Right ventricle myocardium inferior (tissue), 1 donor: ENCODE measurements at regions of chr11 and their contacts with region 1.

Region 1: DNA sequence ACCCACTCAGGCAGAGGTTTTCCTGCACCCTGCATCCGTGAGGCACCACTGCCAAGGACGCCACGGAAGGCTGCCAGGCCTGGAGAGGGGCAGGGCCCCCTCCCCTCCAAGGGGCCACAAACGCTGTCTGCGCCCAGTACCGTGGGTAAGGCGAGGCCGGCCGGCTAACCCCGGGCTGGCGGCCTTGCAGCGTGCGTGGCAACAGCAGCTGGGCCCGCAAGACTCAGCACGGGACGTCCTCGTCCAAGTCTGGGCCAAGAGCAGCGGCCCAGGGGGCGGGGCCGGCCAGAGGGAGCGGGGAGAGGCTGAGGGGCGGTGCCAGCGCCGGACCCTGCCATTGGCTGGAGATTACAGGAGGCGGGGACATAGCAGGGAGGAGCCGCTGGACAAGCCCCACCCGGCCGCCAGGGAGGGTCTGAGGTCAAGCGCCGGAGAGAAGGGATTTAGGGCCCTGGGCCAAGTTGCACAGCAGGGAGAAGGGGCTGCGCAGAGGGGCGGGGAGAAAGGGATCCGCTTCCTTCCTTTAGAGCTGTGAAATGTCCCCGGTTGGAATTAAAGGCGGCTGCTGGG is 16.0 kb downstream of the SLC43A1 start:
- DNase-seq: peak; percentile 99
- ATAC-seq: peak; percentile 99

Region 2: DNA sequence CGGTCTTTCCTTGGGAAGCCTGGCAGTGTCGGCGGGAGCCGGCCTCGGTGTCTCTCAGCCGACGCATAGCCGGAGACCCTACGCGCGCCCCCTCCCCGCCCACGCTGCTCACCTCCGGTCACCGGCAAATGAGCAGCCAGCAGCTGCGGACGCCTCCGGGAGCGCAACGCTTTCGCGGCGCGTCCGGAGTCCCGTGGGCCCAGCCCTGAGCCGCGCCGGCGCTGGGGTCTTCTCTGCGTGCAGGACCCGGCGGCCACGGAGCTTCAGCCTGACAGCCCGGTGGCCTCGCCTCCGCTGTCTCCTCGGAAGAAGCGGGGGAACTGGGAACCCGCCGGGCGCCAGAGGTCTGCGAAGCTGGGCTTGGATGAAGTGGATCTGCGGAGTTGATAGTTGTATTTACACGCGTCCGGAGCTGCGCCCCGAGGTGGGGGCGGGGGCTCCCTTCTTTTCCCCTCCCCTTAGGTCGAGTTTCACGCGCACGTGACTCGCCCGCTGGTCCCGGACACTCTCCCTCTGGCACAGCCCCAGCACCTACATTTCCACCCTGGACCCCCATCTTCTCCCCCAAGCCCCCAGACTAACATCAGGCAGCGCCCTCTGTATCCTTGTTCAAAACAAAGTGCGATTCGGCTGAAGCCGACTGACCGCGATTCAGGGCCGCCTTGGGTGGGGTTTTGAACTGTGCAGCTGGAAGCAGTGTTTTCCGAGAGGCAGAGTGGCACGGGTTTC is 16.0 kb after region 1 on chr11 and contains the start of gene SLC43A1:
- intact Hi-C with region 1: loop called (anchors 2 kb)
- DNase-seq: peak; percentile 76
- ATAC-seq: peak; percentile 82
- total RNA-seq, gene SLC43A1: 6.4 TPM

Region 3: GRCh38 chr11:57530596-57531507 is 31.4 kb after region 1 on chr11 and contains the start of gene TIMM10:
- intact Hi-C with region 1: loop called (anchors 2 kb)
- DNase-seq: peak; percentile 98
- ATAC-seq: peak; percentile 99
- total RNA-seq, gene TIMM10: 58.1 TPM